ENCODE measurements at regions of chr9 and their contacts with region 1.

Region 1: DNA sequence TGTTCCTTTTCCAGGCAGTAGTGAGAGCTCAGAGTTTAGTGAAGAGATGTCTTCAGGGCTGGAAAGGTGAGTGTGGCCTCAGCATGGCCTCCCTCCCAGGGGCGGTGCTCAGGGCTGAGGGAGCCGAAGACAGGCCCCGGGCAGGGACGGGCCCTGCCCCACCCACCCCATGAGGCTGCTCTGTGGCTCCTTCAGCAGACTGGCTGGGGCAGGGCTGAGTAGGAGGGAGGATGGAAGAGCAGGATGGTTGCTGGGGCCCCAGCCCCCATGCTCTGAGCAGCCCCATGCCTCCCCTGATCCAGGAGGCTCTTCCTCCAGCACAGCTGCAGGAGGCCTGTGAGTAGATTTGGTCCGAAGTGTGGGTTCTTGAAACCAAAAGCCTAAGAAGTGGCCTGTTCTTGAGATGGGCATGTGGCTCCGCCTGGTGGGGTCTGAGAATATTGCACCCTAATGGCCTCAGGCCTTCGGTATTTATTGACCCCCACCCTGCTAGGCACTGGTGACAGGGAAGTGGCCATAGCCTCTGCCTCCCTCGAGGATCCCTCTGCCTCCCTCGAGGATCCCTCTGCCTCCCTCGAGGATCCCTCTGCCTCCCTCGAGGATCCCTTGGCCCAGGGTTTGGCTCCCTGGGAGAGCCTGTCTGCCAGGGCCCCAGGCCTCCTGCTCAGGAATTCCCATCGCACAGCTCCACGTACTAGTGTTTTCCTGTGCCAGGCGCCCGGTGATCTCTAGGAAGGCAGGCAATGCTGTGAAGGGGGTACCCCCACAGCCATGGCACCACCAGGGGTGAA is 65.4 kb upstream of the GARNL3 start:
- H3K4me3 Mint-ChIP-seq: no peak overlapping the region
- H3K27ac Mint-ChIP-seq: no peak overlapping the region
- H3K4me1 Mint-ChIP-seq: no peaks in the 10 kb centered on the region
- H3K27me3 Mint-ChIP-seq: peaks cover 15% of the 10 kb centered on the region

Region 2: GRCh38 chr9:126599047-126599650 is 600.0 kb before region 1 on chr9:
- intact Hi-C with region 1: no loop called
- H3K4me3 Mint-ChIP-seq: no peak overlapping the region
- H3K27ac Mint-ChIP-seq: no peak overlapping the region
- H3K4me1 Mint-ChIP-seq: peaks cover 2% of the 10 kb centered on the region
- H3K27me3 Mint-ChIP-seq: peaks cover 67% of the 10 kb centered on the region

Region 3: GRCh38 chr9:126939821-126940221 is 259.4 kb before region 1 on chr9:
- intact Hi-C with region 1: loop called (anchors 1 kb)
- H3K4me3 Mint-ChIP-seq: no peak overlapping the region
- H3K27ac Mint-ChIP-seq: no peak overlapping the region
- H3K4me1 Mint-ChIP-seq: no peaks in the 10 kb centered on the region
- H3K27me3 Mint-ChIP-seq: peaks cover 35% of the 10 kb centered on the region

Region 4: DNA sequence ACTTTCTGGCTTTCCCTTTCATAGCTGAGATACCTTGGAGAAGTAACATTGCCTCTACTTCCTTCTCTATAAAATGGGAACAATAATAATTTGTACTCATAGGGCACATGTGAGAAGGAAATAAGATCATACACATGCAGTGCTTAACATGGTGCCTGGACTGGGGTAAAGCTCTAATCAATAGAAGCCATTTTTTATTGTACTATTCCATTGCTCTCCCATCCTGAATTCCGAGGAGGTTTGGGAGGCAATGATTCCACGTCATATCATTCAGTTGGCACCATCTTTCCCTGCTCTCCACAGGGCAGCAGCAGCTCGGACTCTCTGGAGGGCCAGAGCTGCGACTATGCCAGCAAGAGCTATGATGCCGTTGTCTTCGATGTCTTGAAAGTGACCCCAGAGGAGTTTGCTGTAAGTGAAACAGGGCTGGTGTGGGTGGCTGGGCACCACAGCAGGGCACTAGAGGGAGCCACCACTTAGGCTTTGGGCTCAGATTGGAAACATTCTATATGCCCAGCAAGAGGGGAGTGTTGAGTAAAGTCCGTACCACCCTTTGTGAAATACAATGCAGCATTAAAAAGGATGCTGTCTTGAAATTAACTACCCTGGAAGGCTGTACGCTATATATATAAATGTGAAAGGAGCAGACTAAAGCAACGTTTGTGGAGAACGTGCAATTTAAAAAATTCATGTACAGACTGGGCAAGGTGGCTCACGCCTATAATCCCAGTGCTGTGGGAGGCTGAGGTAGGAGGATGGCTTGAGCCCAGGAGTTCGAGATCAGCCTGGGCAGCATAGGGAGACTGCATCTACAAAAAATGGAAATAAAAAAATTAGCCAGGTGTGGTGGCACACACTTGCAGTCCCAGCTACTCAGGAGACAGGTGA is 233.4 kb before region 1 on chr9:
- intact Hi-C with region 1: loop called (anchors 1 kb)
- H3K4me3 Mint-ChIP-seq: no peak overlapping the region
- H3K27ac Mint-ChIP-seq: no peak overlapping the region
- H3K4me1 Mint-ChIP-seq: no peaks in the 10 kb centered on the region
- H3K27me3 Mint-ChIP-seq: peaks cover 19% of the 10 kb centered on the region

Region 5: GRCh38 chr9:127014216-127014615 is 185.0 kb before region 1 on chr9:
- intact Hi-C with region 1: no loop called
- H3K4me3 Mint-ChIP-seq: no peak overlapping the region
- H3K27ac Mint-ChIP-seq: no peak overlapping the region
- H3K4me1 Mint-ChIP-seq: no peaks in the 10 kb centered on the region
- H3K27me3 Mint-ChIP-seq: peaks cover 37% of the 10 kb centered on the region

Region 6: GRCh38 chr9:127177236-127177635 is 22.0 kb before region 1 on chr9:
- intact Hi-C with region 1: no loop called
- H3K4me3 Mint-ChIP-seq: no peak overlapping the region
- H3K27ac Mint-ChIP-seq: no peak overlapping the region
- H3K4me1 Mint-ChIP-seq: peaks cover 13% of the 10 kb centered on the region
- H3K27me3 Mint-ChIP-seq: peaks cover 2% of the 10 kb centered on the region

Region 7: DNA sequence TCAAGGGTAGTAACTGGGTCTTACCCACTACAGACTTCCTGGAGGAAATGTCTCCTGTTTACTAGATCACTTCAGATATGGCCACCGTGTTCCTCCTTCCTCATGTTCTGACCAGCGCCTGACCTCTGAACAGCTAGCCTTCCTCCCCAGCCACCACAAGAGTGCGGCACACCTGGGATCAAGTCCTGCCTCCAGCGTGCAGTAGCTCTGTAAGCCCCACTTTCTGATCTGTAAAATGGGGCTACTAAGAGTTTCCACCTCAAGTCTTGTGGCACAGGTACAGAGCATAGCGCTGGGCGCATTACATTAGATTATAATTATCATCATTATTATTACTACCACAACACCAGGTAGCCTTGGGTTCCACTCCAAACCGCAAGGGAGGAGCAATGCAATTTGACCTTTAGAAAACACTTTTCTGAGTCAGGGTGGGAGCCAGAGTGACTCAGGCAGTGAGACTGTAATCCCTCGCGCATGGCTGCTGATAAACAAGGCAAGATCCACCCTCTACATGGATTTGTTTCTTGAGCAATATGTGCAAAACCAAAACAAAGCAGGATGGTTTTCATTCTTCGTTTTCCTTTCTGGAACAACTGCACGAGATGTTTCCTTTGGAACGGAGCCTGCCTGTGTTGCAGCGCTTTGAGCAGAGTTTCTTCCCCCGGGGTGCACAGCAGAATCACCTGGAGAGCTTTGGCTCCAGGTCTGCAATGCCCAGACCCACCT is 11.8 kb before region 1 on chr9:
- intact Hi-C with region 1: no loop called
- H3K4me3 Mint-ChIP-seq: no peak overlapping the region
- H3K27ac Mint-ChIP-seq: no peak overlapping the region
- H3K4me1 Mint-ChIP-seq: no peaks in the 10 kb centered on the region
- H3K27me3 Mint-ChIP-seq: peaks cover 18% of the 10 kb centered on the region

Measured in dendritic cell treated with granulocyte-macrophage colony-stimulating factor and Interleukin-4, amounts not matched to agents 40 ng/mL and 50 ng/mL, for 4 days (primary cell).